ENCODE measurements at regions of chr16 and their contacts with region 1.

Region 1: DNA sequence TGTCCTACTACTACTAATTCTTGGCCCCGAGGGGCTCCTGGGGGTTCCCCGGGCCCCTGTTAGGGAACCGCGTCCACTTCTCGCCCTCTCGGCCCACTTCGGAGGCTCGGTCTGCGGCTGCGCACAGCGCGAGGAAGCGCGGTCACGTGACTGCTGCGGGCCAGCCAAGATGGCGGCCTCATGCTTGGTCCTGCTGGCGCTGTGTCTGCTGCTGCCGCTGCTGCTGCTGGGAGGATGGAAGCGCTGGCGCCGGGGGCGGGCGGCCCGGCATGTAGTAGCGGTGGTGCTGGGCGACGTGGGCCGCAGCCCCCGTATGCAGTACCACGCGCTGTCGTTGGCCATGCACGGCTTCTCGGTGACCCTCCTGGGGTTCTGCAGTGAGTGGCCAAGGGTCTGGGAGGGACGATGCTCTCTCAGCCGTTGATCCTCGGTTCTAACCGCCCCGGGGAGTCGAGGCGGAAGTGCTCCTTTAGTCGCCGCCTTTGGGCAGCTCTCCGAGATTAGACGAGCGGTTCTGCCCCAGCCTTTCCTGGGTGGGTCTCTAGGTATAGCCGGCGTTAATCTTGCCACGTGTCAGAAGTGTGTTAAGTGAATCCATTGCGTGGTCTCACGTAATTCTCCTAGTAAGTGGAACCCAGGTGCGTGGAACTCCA is at the start of gene ALG1:
- DNase-seq: peak; percentile 42 to 93
- H3K4me3 ChIP-seq: peak within 1 kb of the TSS; percentile 63 to 68
- H3K27ac ChIP-seq: peak within 1 kb of the TSS; percentile 66 to 77
- H3K4me1 ChIP-seq: peaks cover 0 to 10% of the 10 kb centered on the region in 2 donors
- H3K27me3 ChIP-seq: no peaks in the 10 kb centered on the region
- CTCF ChIP-seq: no peak
- total RNA-seq, gene ALG1: 27.2 TPM

Region 2: DNA sequence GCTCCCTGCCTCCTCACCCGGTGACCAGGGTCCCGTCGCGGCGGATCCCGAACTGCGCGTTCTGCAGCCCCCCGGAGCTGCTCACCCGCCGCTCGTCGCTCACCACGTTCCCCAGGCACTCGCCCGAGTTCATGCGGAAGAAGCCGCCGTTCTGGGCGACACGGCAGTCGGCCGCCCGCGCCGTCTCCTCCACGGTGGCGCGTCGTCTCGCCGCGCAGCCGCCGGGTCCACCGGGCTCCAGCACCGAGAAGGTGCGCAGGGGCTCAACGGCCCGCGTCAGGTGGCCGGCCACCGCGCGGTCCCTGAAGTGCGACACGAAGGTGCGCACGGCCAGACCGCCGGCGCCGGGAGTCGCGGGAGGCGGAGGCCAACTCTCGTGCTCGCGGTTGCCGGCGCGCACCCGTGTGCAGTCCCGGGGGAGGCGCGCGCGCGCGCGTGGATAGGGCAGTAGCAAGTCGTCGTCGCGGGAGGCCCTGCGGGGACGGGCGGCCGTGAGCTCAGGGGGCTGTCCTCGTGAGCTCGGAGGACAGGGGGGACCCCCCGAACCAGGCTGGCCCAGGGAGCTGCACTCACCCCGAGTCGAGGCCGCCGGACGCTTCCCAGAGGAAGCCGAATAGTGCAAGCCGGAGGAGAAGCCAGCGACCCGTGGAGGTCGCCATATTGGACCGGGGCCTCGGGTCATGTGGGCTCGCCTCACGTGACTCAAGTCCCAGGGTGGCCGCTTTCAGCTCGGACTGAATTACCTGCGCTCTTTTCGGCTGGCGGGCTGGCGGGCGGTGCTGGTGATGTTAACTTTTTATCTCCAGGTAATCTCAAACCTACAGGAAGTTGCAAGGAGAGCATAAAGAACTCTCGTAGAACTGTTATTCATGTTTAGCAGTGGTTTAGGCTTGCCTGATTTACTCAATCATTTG is 38.3 kb before region 1 on chr16 and contains the start of gene NAGPA:
- intact Hi-C with region 1: loop called (anchors 5 kb)
- DNase-seq: peak; percentile 37 to 94
- H3K4me3 ChIP-seq: peak within 1 kb of the TSS; percentile 87 to 99
- H3K27ac ChIP-seq: peak within 1 kb of the TSS; percentile 34 to 54
- H3K4me1 ChIP-seq: peaks cover 11 to 14% of the 10 kb centered on the region in 2 donors
- H3K27me3 ChIP-seq: no peaks in the 10 kb centered on the region
- CTCF ChIP-seq: no peak
- total RNA-seq, gene NAGPA: 23.0 TPM